ENCODE measurements at regions of chr2 and their contacts with region 1.

Region 1: DNA sequence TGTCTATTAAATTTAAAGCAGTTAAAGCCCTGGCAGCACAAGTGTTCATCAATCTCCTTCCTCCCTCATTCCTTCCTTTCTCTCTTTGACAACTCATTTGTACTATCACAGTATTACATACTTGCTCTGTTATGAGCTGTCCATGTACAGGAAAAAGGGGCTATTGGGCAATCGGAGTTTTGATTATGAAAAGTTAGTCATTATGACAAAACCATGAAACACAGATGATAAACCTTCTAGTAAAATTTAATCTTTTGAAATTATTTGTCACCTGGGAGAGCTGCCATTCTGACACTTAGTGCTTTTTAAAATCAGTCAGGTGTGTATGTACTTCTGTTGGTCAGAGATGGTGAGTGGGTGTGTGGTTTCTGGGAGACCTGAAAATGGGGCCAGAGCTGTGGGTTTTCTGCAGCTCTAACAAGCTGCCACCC is 39.4 kb downstream of the MAP4K4 start:
- DNase-seq: peak; percentile 77
- H3K4me3 Mint-ChIP-seq: peak overlapping the region; percentile 8
- H3K27ac Mint-ChIP-seq: peak overlapping the region; percentile 89
- H3K4me1 Mint-ChIP-seq: peaks cover 90% of the 10 kb centered on the region
- H3K27me3 Mint-ChIP-seq: no peaks in the 10 kb centered on the region

Region 2: DNA sequence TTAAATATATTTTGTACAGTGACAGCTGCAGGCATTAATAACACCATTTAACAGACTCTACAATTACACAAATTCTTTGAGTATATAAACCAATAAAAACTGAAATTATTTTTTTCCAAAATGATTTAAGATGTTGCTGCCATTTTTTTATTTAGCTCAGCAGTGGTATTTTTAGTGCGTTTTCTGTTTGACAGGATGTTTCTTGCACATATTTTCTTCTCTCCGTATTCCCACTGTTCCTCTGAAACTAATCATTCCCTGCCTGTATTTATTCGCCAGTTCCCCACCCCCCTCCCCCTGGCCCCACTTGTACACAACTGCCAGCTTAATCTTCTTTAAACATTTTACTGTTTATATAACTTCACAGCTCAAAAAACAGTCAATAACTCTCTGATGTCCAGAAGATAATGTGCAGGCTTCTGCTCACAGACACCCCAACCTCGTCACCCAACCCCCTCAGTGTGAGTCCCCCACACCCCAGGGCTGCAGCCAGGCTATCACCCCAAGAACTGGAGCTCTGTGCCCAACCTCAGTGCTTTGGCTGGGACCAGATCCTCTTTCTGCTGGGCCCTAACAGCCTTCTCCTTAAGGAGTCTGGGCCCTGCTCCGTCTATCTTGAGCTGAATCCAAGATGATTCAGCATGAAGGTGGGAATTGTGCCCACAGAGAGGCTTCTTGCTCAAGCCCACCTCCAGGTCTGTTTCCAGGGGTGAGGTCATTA is 81.0 kb before region 1 on chr2:
- CTCF ChIA-PET with region 1: no interaction called
- intact Hi-C with region 1: loop called (anchors 2 kb)
- DNase-seq: no peak
- H3K4me3 Mint-ChIP-seq: no peak overlapping the region
- H3K27ac Mint-ChIP-seq: no peak overlapping the region
- H3K4me1 Mint-ChIP-seq: peaks cover 25% of the 10 kb centered on the region
- H3K27me3 Mint-ChIP-seq: no peaks in the 10 kb centered on the region

Region 3: DNA sequence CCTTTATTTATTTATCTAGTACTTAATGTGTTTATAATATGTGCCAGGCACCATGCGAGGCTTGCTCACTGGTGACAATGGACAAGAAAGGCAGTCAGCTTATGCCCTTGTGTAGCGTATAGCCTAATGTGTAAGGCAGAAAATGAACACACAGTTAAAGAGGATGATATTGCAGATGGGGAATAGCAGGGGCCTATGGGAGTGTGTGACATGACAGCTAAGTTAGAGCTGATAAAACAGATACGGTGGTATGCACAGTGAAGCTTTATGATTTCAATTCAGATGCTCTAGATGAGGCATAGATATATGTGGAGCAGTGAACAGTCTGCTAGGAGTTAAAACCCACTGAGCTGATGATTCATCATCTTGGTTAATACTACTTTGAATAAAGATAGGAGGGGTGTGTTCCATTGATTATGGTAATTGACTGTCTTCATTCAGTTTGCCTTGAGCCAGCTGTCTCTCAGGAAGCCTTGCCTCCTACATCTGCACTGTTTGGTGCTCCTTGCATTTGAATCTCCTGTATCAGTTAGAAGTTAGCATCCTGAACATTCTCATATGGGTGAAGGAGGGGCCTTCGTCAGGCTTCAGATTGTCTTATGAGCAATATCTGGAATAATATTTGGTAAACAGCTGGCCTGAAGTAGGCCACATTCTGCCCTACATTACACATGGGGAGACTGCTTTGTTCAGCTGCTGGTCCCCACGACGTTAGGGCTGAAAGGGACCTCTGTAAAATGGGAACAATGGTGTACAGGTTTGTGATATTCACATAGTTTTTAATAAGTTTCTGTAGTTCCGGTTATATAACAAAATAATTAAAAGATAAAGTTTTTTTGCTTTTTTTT is 26.2 kb before region 1 on chr2:
- CTCF ChIA-PET with region 1: interaction called, 4 read pairs
- intact Hi-C with region 1: loop called (anchors 1 kb)
- DNase-seq: no peak
- H3K4me3 Mint-ChIP-seq: peak overlapping the region; percentile 23
- H3K27ac Mint-ChIP-seq: peak overlapping the region; percentile 59
- H3K4me1 Mint-ChIP-seq: peaks cover 83% of the 10 kb centered on the region
- H3K27me3 Mint-ChIP-seq: no peaks in the 10 kb centered on the region

Region 4: DNA sequence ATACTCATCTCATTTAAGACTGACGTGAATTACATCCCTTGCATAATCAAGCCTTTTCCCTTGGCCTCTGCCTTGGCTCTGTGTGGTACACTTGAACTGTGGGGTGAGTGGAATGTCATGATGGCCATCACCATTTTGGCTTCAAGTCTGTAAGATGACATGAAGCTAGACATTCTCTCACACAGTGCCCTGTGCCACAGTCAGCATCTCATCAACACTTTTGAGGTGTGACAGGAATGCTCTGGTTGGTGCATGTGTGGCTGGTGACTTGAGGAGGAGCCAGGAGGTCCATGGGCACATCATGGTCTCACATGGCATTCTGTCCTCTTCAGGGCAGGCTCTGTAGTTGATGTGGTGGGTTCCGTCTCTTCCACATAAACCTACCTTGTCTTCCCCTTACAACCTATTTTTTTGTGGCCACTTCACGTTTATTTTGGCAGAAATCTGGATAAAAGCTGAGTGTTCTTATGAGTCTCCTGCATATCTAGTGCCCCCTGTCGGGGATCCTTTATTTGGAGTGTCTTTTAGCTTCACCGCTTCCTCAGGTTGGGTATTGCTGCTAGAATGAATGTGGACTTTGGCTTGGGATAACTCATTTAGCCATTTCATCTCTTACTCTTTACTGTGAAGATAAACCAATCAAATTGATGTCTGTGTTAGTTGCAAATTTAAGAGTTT is 11.2 kb before region 1 on chr2:
- CTCF ChIA-PET with region 1: interaction called, 10 read pairs
- intact Hi-C with region 1: no loop called
- DNase-seq: peak; percentile 57
- H3K4me3 Mint-ChIP-seq: no peak overlapping the region
- H3K27ac Mint-ChIP-seq: peak overlapping the region; percentile 5
- H3K4me1 Mint-ChIP-seq: peaks cover 97% of the 10 kb centered on the region
- H3K27me3 Mint-ChIP-seq: no peaks in the 10 kb centered on the region

Region 5: GRCh38 chr2:102063941-102064678 is 327.2 kb after region 1 on chr2:
- CTCF ChIA-PET with region 1: no interaction called
- intact Hi-C with region 1: loop called (anchors 2 kb)
- DNase-seq: peak; percentile 73
- H3K4me3 Mint-ChIP-seq: no peak overlapping the region
- H3K27ac Mint-ChIP-seq: peak overlapping the region; percentile 44
- H3K4me1 Mint-ChIP-seq: peaks cover 27% of the 10 kb centered on the region
- H3K27me3 Mint-ChIP-seq: no peaks in the 10 kb centered on the region

Region 6: DNA sequence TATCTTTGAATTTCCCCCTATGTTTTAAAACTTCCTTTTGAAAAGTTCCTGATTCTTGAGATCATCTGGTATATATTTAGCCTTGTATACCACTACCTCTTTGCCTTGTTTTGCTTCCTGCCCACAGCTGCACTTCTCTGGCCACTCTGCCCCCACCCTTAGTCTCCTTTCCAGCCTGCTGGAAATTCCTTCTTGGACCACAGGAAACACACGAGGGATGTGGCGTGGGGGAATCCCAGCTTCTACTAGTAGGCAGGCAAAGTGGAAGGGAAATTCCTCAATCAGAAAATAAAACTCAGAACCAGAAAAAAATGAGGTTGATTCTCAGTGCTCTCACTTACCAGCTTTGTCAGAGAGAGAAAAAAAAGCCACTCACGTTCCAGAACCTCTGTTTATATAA is 699.4 kb after region 1 on chr2:
- CTCF ChIA-PET with region 1: no interaction called
- intact Hi-C with region 1: loop called (anchors 10 kb)
- DNase-seq: peak; percentile 56
- H3K4me3 Mint-ChIP-seq: no peak overlapping the region
- H3K27ac Mint-ChIP-seq: peak overlapping the region; percentile 68
- H3K4me1 Mint-ChIP-seq: peaks cover 27% of the 10 kb centered on the region
- H3K27me3 Mint-ChIP-seq: no peaks in the 10 kb centered on the region

Measured in activated naive CD4-positive, alpha-beta T cell treated with anti-CD3 and anti-CD28 coated beads for 36 hours (primary cell).